ENCODE measurements at regions of chr22 and their contacts with region 1.

Region 1: GRCh38 chr22:23539135-23539838 is 40.8 kb downstream of the IGLL1 start:
- DNase-seq: peak; percentile 75 to 78 (median 76)
- ATAC-seq: peak; percentile 98 to 99 (median 99)
- H3K4me3 ChIP-seq: no peak overlapping the region
- H3K27ac ChIP-seq: no peak overlapping the region
- H3K4me1 ChIP-seq: no peaks in the 10 kb centered on the region
- H3K27me3 ChIP-seq: no peaks in the 10 kb centered on the region
- CTCF ChIP-seq: peak; percentile 79 to 93 (median 82)
- POLR2A ChIP-seq: no peak

Region 2: DNA sequence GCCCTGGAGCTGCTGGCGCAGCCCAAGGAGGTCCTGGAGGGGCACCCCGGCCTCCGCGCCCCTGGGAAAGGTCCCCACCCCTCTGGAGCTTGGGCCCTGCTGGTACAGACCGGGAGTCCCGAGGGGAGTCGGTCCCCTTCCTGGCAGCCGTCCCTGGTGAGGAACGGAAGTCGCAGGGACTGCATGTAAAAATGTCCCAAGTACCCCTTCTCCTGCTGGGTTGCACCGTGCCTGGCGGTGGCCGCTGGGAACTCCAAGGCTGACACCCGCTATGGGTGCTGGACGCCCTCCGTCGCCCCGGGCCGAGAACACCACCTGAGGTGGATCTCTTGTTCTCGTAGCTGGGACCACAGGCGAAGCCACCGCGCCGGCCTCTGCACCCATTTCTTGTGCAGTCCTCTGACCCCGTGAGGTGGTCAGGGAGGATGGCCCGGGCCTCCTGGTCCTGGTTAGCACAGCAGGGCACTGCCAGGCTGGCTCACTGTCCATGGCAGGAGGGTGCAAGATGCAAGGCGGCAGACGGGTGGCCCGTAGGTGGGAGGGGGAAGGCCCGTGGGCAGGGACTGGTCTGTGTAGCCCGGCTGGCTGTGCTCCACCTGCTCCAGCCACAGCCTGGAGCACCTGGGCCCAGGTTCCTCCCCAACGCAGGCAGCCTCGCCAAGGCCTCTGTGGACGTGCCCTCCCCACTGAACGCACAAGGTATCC is 124.4 kb before region 1 on chr22:
- intact Hi-C with region 1: loop called in 1 of 2 experiments (anchors 10 kb)
- DNase-seq: no peak
- ATAC-seq: peak in 1 of 4 donors; percentile 46
- H3K4me3 ChIP-seq: no peak overlapping the region
- H3K27ac ChIP-seq: no peak overlapping the region
- H3K4me1 ChIP-seq: no peaks in the 10 kb centered on the region
- H3K27me3 ChIP-seq: no peaks in the 10 kb centered on the region
- CTCF ChIP-seq: no peak
- POLR2A ChIP-seq: no peak

Region 3: DNA sequence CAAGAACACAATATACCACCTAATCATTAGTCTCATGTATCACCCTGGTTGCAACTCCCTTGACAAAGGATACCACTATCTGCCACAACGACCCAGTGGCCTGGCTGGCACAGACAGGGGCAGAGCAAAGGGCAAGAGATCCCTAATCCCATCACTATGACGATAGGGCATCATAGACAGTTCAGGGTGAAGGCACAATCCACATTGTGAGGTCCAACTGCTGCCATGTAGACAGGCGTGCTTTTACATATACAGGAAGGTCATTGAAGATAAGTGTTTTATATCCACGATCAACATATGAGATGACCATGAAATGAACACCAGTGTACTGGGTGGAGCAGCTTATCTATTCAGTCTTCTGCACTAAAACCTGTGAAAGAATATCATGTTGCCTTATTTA is 53.8 kb before region 1 on chr22:
- intact Hi-C with region 1: no loop called
- DNase-seq: no peak
- ATAC-seq: peak in 3 of 4 donors; percentile 35 to 64 (median 48)
- H3K4me3 ChIP-seq: no peak overlapping the region
- H3K27ac ChIP-seq: no peak overlapping the region
- H3K4me1 ChIP-seq: no peaks in the 10 kb centered on the region
- H3K27me3 ChIP-seq: no peaks in the 10 kb centered on the region
- CTCF ChIP-seq: no peak
- POLR2A ChIP-seq: no peak